ENCODE measurements at regions of chr14 and their contacts with region 1.

Region 1: DNA sequence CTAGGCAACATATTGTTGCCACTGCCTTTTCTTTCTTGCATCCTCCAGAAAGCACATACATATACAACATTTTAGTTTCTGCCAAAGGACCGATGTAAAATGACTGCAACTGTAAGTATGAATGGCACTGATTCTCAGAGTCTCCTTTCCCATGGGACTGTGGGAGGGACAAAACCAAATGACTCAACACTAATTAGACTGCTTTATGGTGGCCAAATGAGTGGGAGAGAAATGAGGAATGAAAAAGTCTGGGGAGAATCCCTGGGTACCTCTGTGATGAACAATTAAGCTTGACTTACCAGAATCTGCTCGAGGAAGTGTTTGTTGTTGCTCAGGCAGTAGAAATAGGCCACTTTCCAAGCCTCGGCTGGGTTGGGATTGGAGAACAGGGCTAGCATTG is 10.1 kb downstream of the ZFYVE26 start:
- DNase-seq: no peak
- H3K4me3 Mint-ChIP-seq: no peak overlapping the region
- H3K27ac Mint-ChIP-seq: no peak overlapping the region
- H3K4me1 Mint-ChIP-seq: peaks cover 3% of the 10 kb centered on the region
- H3K27me3 Mint-ChIP-seq: no peaks in the 10 kb centered on the region

Region 2: DNA sequence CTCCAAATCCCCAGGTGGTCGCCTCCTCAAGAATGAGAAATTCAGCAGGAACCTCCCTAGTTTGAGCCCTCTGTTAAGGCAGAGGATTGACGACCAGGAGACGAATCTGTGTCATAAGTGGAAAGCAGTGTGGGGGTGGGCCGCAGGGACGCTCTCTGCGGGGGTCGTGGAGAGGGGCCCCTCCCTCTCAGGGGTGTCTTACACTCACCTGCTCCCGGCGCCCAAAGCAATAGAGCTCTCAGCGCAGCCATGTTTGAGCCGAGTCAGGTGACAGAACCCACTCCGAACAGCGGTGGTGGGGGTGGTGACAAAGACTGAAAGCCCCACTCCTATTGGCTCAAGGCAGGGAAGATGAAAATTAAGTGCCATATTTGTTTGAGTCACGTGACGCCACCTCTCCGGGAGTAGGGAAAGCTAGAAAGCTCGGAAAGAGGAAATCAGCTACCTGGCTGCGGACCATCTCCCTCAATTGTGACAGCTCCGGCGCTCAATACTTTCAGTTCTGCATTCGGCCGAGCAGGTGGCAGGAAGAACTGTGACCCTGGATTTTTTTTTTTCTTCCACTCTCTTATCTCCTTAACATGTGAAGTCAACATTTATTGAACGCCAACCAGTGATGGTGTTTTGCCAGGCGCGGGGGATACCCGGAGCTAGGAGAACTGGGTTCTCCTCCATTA is 10.2 kb after region 1 on chr14 and contains the start of gene ZFYVE26:
- CTCF ChIA-PET with region 1: no interaction called
- POLR2A ChIA-PET with region 1: interaction called, 20 read pairs
- DNase-seq: peak; percentile 93
- H3K4me3 Mint-ChIP-seq: peak within 1 kb of the TSS; percentile 88
- H3K27ac Mint-ChIP-seq: peak within 1 kb of the TSS; percentile 86
- H3K4me1 Mint-ChIP-seq: peaks cover 51% of the 10 kb centered on the region
- H3K27me3 Mint-ChIP-seq: no peaks in the 10 kb centered on the region
- total RNA-seq, gene ZFYVE26: 20.8 to 21.4 TPM